ENCODE measurements at regions of chr9 and their contacts with region 1.

Region 1: GRCh38 chr9:15333376-15333881 is 26.4 kb upstream of the TTC39B start:
- DNase-seq: no peak
- H3K4me3 ChIP-seq: no peak overlapping the region
- CTCF ChIP-seq: no peak

Region 2: GRCh38 chr9:15239816-15240215 is 93.6 kb before region 1 on chr9:
- in situ Hi-C with region 1: loop called (anchors 5 kb)
- DNase-seq: no peak
- H3K4me3 ChIP-seq: no peak overlapping the region
- CTCF ChIP-seq: no peak

Region 3: GRCh38 chr9:15381491-15381890 is 48.1 kb after region 1 on chr9:
- in situ Hi-C with region 1: loop called (anchors 5 kb)
- DNase-seq: no peak
- H3K4me3 ChIP-seq: no peak overlapping the region
- CTCF ChIP-seq: no peak

Region 4: DNA sequence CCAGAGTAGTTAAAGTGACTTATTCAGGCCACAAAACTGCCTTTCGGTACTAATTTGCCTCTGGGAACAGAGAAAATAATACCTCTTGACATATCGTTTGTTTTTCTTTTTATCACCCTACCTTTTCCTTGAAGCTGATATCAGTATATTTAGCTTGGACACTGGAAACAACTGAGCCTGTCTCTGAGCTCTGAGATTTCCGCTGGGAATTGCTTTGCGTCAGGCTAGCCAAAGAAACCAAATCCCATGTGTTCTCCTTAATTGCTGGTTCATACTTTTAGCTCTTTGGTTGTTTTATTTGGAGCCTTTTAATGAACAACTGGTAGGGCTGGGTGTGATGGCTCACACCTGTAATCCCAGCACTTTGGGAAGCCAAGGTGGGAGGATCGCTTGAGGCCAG is 58.9 kb after region 1 on chr9:
- in situ Hi-C with region 1: no loop called
- DNase-seq: no peak
- H3K4me3 ChIP-seq: no peak overlapping the region
- CTCF ChIP-seq: no peak

Measured in astrocyte of the cerebellum (primary cell).